GM12878 (cell line): ENCODE measurements at regions of chr11 and their contacts with region 1.

Region 1: DNA sequence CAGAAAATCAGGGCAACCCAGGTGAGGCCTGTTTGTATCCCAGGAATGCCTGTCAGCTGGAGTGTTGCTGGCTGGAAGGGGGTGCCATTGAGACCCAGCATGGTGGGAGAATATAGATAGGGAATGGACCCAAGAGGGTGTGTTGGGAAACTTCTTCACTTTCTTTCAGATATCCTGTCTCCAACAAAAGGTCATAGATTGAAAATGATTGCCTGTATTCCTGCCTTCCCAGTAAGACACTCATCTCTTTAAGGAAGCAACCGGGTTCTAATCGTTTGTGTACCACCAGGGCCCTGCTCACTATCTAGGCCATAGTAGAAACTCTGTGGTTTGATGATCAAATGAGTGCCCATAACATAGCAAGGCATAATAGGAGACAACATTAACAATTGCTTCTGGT is at the start of gene OR51I1:
- DNase-seq: no peak
- ATAC-seq: no peak
- H3K4me3 ChIP-seq: no peak within 1 kb of the TSS
- H3K27ac ChIP-seq: no peak within 1 kb of the TSS
- H3K4me1 ChIP-seq: no peaks in the 10 kb centered on the region
- H3K27me3 ChIP-seq: no peaks in the 10 kb centered on the region; a peak in 1 of 4 replicates
- CTCF ChIP-seq: no peak
- EP300 ChIP-seq: no peak
- POLR2A ChIP-seq: no peak
- RAD21 ChIP-seq: no peak
- polyA plus RNA-seq, gene OR51I1: not detected

Region 2: GRCh38 chr11:5390210-5390609 is 51.2 kb before region 1 on chr11:
- CTCF ChIA-PET with region 1: no interaction called
- POLR2A ChIA-PET with region 1: no interaction called
- RAD21 ChIA-PET with region 1: no interaction called
- SMC1A ChIA-PET with region 1: interaction called, 3 read pairs
- in situ Hi-C with region 1: loop called (anchors 5 kb)
- intact Hi-C with region 1: no loop called
- DNase-seq: no peak
- ATAC-seq: no peak
- H3K4me3 ChIP-seq: no peak overlapping the region
- H3K27ac ChIP-seq: no peak overlapping the region
- H3K4me1 ChIP-seq: no peaks in the 10 kb centered on the region
- H3K27me3 ChIP-seq: no peaks in the 10 kb centered on the region
- CTCF ChIP-seq: peak in 2 of 3 experiments; percentile 9 to 12; a peak in 1 of 6 replicates
- EP300 ChIP-seq: no peak
- POLR2A ChIP-seq: no peak
- RAD21 ChIP-seq: no peak

Region 3: GRCh38 chr11:5712507-5712906 is 271.1 kb after region 1 on chr11:
- CTCF ChIA-PET with region 1: no interaction called
- POLR2A ChIA-PET with region 1: no interaction called
- RAD21 ChIA-PET with region 1: no interaction called
- SMC1A ChIA-PET with region 1: no interaction called
- in situ Hi-C with region 1: no loop called
- intact Hi-C with region 1: no loop called
- DNase-seq: no peak
- ATAC-seq: peak; percentile 72
- H3K4me3 ChIP-seq: no peak overlapping the region
- H3K27ac ChIP-seq: no peak overlapping the region
- H3K4me1 ChIP-seq: no peaks in the 10 kb centered on the region
- H3K27me3 ChIP-seq: no peaks in the 10 kb centered on the region
- CTCF ChIP-seq: peak; percentile 24 to 60 (median 50); a peak in 4 of 6 replicates
- EP300 ChIP-seq: no peak
- POLR2A ChIP-seq: no peak
- RAD21 ChIP-seq: peak; percentile 58